ENCODE measurements at regions of chr19 and their contacts with region 1.

Region 1: GRCh38 chr19:49243129-49243528 is 81.9 kb downstream of the SLC6A16 start:
- DNase-seq: no peak
- ATAC-seq: no peak
- H3K4me3 ChIP-seq: no peak overlapping the region
- H3K27ac ChIP-seq: no peak overlapping the region
- H3K4me1 ChIP-seq: no peaks in the 10 kb centered on the region
- CTCF ChIP-seq: no peak
- EP300 ChIP-seq: no peak
- POLR2A ChIP-seq: no peak
- RAD21 ChIP-seq: no peak

Region 2: GRCh38 chr19:49264258-49264657 is 21.1 kb after region 1 on chr19:
- CTCF ChIA-PET with region 1: interaction called, 58 read pairs
- POLR2A ChIA-PET with region 1: no interaction called
- DNase-seq: no peak
- ATAC-seq: no peak
- H3K4me3 ChIP-seq: no peak overlapping the region
- H3K27ac ChIP-seq: no peak overlapping the region
- H3K4me1 ChIP-seq: no peaks in the 10 kb centered on the region
- CTCF ChIP-seq: no peak
- EP300 ChIP-seq: no peak
- POLR2A ChIP-seq: no peak
- RAD21 ChIP-seq: no peak

Measured in A549 (cell line).